ENCODE measurements at regions of chr5 and their contacts with region 1.

Region 1: DNA sequence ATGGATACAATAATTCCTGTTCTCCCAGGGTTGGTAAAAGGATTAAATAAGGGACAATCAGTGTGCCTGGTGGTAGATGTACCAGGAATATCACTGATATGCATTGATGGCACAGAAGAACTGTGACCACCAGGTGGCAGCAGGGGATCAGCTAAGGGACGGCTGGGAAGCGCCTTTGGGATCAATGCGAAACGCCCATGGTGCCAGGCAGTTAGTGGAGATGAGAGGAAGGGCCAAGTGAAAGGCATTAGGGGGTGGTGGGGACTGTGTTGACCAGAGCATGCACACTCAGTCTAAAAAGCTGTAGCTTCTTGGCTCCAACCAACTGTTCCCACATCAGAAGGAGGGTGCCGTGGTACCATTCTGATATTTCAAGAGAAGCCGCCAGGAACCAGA is 55.6 kb downstream of the ARHGEF37 start:
- DNase-seq: peak; percentile 75
- CTCF ChIP-seq: peak; percentile 52

Region 2: GRCh38 chr5:149828161-149828884 is 191.5 kb after region 1 on chr5:
- in situ Hi-C with region 1: loop called (anchors 5 kb)
- DNase-seq: peak; percentile 85
- CTCF ChIP-seq: peak; percentile 81

Region 3: GRCh38 chr5:150000256-150000989 is 363.6 kb after region 1 on chr5 and contains the starts of genes HMGXB3 and TIGD6:
- in situ Hi-C with region 1: loop called (anchors 5 kb)
- DNase-seq: peak; percentile 95
- CTCF ChIP-seq: no peak

Measured in GM13976 (cell line).